Posterior cingulate gyrus (tissue), 11 donors: ENCODE measurements at regions of chr13 and their contacts with region 1.

Region 1: GRCh38 chr13:111460548-111461444 is 140.4 kb downstream of the TEX29 start:
- DNase-seq: peak; percentile 42 to 95 (median 71)

Region 2: DNA sequence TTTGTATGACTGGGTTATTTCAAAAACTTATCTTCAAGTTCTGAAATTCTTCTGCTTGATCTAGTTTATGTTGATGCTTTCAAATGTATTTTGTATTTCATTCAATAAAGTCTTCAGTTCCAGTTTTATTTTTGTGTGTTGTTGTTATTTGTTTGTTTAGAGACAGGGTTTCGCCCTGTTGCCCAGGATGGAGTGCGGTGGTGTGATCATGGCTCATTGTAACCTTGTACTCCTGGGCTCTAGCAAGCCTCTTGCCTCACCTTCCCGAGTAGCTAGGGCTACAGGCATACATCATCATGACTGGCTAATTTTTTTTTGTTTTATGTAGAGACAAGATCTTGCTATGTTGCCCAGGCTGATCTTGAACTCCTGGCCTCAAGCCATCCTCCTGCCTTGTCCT is 386.0 kb before region 1 on chr13:
- intact Hi-C with region 1: loop called (anchors 5 kb)
- DNase-seq: no peak

Region 3: GRCh38 chr13:111153279-111153976 is 307.4 kb before region 1 on chr13:
- intact Hi-C with region 1: loop called (anchors 10 kb)
- DNase-seq: peak; percentile 91 to 99 (median 94)

Region 4: GRCh38 chr13:111216166-111216960 is 244.4 kb before region 1 on chr13:
- intact Hi-C with region 1: loop called (anchors 10 kb)
- DNase-seq: peak in 4 of 10 donors; percentile 39 to 91 (median 60)